Activated T-helper 1 cell treated with anti-CD3 and anti-CD28 coated beads, Interleukin-12 subunit alpha, Interleukin-12 subunit beta, Interleukin-2, Interleukin-4 antibody, amounts not matched to agents 30 ng/mL and 10 ng/mL and 1 ng/mL, durations not matched to agents 14 hours and 24 hours and 36 hours (primary cell): ENCODE measurements at regions of chr17 and their contacts with region 1.

Region 1: GRCh38 chr17:21275579-21276263 is 8.8 kb upstream of the MAP2K3 start:
- DNase-seq: peak; percentile 92
- H3K4me3 Mint-ChIP-seq: peak overlapping the region; percentile 95
- H3K27ac Mint-ChIP-seq: peak overlapping the region; percentile 63
- H3K4me1 Mint-ChIP-seq: peaks cover 43% of the 10 kb centered on the region
- H3K27me3 Mint-ChIP-seq: peaks cover 3% of the 10 kb centered on the region

Region 2: DNA sequence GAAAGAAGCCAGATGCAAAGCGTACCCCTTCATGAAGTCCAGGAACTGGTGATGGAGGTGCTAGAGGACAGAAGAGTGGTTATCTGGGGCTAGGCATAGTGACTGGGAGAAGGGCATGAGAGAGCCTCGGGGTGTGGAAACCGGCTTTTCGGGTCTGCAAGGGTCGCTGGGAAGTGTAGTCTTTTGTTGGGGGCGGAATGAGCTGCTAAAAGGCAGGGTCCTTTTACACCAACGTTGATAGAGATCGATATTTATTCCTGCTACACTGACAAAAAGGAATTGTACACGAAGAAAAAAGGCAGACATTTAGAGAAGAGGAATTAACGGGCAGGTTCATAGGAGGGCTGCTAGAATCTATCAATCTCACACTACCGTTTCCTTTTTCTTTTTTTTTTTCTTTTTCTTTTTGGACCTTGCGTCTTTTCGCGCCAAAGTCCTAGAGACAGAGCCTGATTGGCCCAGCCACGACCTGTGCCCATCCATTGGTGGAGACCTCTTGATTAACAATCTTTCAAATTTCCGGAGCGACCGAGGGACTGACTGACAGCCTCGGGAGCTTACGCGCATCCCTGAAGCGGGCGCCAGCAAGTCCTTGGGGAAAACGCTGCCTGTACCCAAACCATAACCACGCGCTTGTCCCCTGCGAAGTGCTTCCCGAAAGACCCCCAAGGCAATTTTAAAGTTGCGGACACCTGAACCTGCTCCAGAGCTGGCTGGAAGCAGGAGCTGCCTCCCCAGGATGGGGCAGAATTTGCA is 176.6 kb before region 1 on chr17:
- intact Hi-C with region 1: loop called (anchors 1 kb)
- DNase-seq: peak; percentile 68
- H3K4me3 Mint-ChIP-seq: peak overlapping the region; percentile 92
- H3K27ac Mint-ChIP-seq: peak overlapping the region; percentile 88
- H3K4me1 Mint-ChIP-seq: peaks cover 27% of the 10 kb centered on the region
- H3K27me3 Mint-ChIP-seq: no peaks in the 10 kb centered on the region

Region 3: GRCh38 chr17:21119247-21119918 is 156.3 kb before region 1 on chr17:
- intact Hi-C with region 1: loop called (anchors 1 kb)
- DNase-seq: peak; percentile 53
- H3K4me3 Mint-ChIP-seq: no peak overlapping the region
- H3K27ac Mint-ChIP-seq: no peak overlapping the region
- H3K4me1 Mint-ChIP-seq: peaks cover 12% of the 10 kb centered on the region
- H3K27me3 Mint-ChIP-seq: peaks cover 12% of the 10 kb centered on the region

Region 4: DNA sequence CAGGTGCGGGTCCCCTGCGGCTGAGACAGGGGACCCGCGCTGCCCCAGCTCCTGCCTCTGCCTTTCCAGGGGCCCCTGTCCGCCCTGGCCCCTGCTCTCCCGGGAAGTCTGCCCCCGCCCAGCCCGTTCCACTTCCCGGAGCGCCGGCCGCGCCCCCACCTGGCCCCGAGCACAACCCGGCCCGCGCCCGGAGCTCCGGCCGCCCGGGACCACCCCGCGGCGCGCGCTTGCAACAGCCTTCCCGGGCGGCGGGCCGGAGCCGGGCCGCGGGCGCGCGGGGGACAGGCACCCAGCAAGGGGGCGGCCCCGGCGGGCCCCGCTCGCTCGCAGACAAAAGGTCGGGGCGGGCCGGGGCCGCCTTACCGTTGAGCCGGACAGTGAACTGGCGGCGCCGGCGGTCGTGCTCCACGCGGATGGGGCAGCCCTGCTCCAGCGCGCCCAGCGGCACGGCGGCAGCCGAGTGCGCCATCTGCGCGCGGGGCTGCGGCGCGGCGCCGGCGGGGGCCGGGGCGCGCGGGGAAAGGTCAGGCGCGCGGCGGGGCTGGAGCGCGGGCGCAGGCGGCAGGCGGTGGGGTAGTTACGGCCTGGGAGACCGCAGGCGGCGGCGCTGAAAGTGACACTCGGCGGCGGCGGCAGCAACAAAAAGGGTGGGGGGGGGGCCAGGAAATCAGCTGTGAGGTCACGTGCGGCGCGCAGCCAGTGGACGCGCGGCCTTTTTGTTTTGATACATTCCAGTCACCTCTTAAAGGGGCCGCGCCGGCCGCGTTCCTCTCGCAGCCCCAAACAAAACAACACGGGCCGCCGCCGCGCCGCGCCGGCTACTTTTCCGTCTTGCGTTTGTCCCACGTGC is 22.7 kb before region 1 on chr17 and contains the start of gene NATD1:
- intact Hi-C with region 1: loop called (anchors 1 kb)
- DNase-seq: peak; percentile 70
- H3K4me3 Mint-ChIP-seq: peak within 1 kb of the TSS; percentile 83
- H3K27ac Mint-ChIP-seq: peak within 1 kb of the TSS; percentile 23
- H3K4me1 Mint-ChIP-seq: peaks cover 7% of the 10 kb centered on the region
- H3K27me3 Mint-ChIP-seq: peaks cover 13% of the 10 kb centered on the region
- total RNA-seq, gene NATD1: 1.6 and 1.7 TPM in 2 replicates